Caco-2 (cell line): ENCODE measurements at regions of chr20 and their contacts with region 1.

Region 1: GRCh38 chr20:6583134-6583738 is 184.2 kb upstream of the BMP2 start:
- DNase-seq: peak; percentile 58 to 70
- H3K4me3 ChIP-seq: no peak overlapping the region
- H3K4me3 Mint-ChIP-seq: no peak overlapping the region
- H3K27ac Mint-ChIP-seq: no peak overlapping the region
- H3K4me1 ChIP-seq: no peaks in the 10 kb centered on the region
- H3K4me1 Mint-ChIP-seq: peaks cover 7% of the 10 kb centered on the region
- H3K27me3 ChIP-seq: no peaks in the 10 kb centered on the region
- H3K27me3 Mint-ChIP-seq: no peaks in the 10 kb centered on the region
- CTCF ChIP-seq: peak; percentile 70 to 72

Region 2: DNA sequence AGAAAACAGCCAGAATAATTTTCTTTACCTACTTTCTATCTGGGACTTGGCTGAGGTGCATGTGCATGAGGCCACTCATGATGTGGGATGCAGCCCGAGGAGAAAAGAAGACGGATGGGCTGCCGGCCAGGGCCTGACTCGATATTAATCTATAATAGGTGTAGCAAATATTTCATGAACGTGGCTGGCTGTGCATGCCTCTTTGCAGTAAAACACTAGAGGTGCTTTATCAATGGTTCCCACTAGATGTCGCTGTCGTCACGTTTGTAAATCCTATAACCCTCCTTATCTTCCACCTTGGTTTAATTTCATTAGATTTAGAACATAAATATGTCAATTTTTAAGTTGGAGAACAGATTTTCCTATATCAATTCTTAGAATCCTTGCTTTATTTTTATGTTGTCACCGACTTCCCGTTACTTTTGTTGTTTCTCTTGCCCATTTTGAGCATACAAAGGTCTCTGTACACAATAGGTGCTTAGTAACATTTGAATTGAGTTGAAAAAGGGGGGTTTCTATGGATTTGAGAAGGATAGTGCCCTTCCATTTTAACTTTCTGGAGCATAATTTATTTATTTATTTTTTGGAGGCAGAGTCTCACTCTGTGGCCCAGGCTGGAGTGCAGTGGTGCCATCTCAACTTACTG is 440.8 kb before region 1 on chr20:
- CTCF ChIA-PET with region 1: no interaction called
- POLR2A ChIA-PET with region 1: no interaction called
- intact Hi-C with region 1: loop called (anchors 2 kb)
- DNase-seq: peak; percentile 54 to 67
- H3K4me3 ChIP-seq: no peak overlapping the region
- H3K4me3 Mint-ChIP-seq: no peak overlapping the region
- H3K27ac Mint-ChIP-seq: no peak overlapping the region
- H3K4me1 ChIP-seq: no peaks in the 10 kb centered on the region
- H3K4me1 Mint-ChIP-seq: no peaks in the 10 kb centered on the region
- H3K27me3 ChIP-seq: no peaks in the 10 kb centered on the region; the same call in 1 of the 2 replicates
- H3K27me3 Mint-ChIP-seq: peaks cover under 1% of the 10 kb centered on the region
- CTCF ChIP-seq: peak; percentile 71 to 84

Region 3: GRCh38 chr20:6623989-6624388 is 40.8 kb after region 1 on chr20:
- CTCF ChIA-PET with region 1: interaction called, 7 read pairs
- POLR2A ChIA-PET with region 1: no interaction called
- intact Hi-C with region 1: loop called (anchors 1 kb)
- DNase-seq: peak; percentile 65 to 77
- H3K4me3 ChIP-seq: no peak overlapping the region
- H3K4me3 Mint-ChIP-seq: peak overlapping the region; percentile 51
- H3K27ac Mint-ChIP-seq: no peak overlapping the region
- H3K4me1 ChIP-seq: peaks cover 15% of the 10 kb centered on the region
- H3K4me1 Mint-ChIP-seq: no peaks in the 10 kb centered on the region
- H3K27me3 ChIP-seq: no peaks in the 10 kb centered on the region
- H3K27me3 Mint-ChIP-seq: no peaks in the 10 kb centered on the region
- CTCF ChIP-seq: no peak

Region 4: DNA sequence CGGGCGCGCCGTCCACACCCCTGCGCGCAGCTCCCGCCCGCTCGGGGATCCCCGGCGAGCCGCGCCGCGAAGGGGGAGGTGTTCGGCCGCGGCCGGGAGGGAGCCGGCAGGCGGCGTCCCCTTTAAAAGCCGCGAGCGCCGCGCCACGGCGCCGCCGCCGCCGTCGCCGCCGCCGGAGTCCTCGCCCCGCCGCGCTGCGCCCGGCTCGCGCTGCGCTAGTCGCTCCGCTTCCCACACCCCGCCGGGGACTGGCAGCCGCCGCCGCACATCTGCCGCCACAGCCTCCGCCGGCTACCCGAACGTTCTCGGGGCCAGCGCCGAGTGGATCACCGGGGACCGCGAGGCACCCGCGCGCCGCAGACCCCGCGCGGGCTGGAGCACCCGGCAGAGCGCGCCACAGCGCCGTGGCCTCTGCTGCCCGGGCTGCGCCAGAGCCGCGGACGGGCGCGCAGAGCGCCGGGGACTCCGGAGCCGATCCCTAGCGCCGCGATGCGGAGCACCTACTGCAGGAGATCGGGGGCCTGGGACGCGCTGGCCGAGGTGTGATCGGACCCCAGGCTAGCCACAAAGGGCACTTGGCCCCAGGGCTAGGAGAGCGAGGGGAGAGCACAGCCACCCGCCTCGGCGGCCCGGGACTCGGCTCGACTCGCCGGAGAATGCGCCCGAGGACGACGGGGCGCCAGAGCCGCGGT is 184.4 kb after region 1 on chr20 and contains the start of gene BMP2:
- CTCF ChIA-PET with region 1: interaction called, 3 read pairs
- POLR2A ChIA-PET with region 1: no interaction called
- intact Hi-C with region 1: loop called (anchors 2 kb)
- DNase-seq: peak; percentile 63 to 79
- H3K4me3 ChIP-seq: peak within 1 kb of the TSS; percentile 96
- H3K4me3 Mint-ChIP-seq: peak within 1 kb of the TSS; percentile 92
- H3K27ac Mint-ChIP-seq: peak within 1 kb of the TSS; percentile 53
- H3K4me1 ChIP-seq: peaks cover 21% of the 10 kb centered on the region
- H3K4me1 Mint-ChIP-seq: peaks cover 33% of the 10 kb centered on the region
- H3K27me3 ChIP-seq: no peaks in the 10 kb centered on the region
- H3K27me3 Mint-ChIP-seq: no peaks in the 10 kb centered on the region
- CTCF ChIP-seq: no peak
- total RNA-seq, gene BMP2: 24.3 and 27.3 TPM in 2 replicates

Region 5: GRCh38 chr20:7031222-7031621 is 448.0 kb after region 1 on chr20:
- CTCF ChIA-PET with region 1: no interaction called
- POLR2A ChIA-PET with region 1: no interaction called
- intact Hi-C with region 1: no loop called
- DNase-seq: no peak
- H3K4me3 ChIP-seq: no peak overlapping the region
- H3K4me3 Mint-ChIP-seq: no peak overlapping the region
- H3K27ac Mint-ChIP-seq: no peak overlapping the region
- H3K4me1 ChIP-seq: no peaks in the 10 kb centered on the region
- H3K4me1 Mint-ChIP-seq: no peaks in the 10 kb centered on the region
- H3K27me3 ChIP-seq: no peaks in the 10 kb centered on the region; the same call in 1 of the 2 replicates
- H3K27me3 Mint-ChIP-seq: peaks cover 5% of the 10 kb centered on the region
- CTCF ChIP-seq: peak; percentile 37 to 51

Region 6: DNA sequence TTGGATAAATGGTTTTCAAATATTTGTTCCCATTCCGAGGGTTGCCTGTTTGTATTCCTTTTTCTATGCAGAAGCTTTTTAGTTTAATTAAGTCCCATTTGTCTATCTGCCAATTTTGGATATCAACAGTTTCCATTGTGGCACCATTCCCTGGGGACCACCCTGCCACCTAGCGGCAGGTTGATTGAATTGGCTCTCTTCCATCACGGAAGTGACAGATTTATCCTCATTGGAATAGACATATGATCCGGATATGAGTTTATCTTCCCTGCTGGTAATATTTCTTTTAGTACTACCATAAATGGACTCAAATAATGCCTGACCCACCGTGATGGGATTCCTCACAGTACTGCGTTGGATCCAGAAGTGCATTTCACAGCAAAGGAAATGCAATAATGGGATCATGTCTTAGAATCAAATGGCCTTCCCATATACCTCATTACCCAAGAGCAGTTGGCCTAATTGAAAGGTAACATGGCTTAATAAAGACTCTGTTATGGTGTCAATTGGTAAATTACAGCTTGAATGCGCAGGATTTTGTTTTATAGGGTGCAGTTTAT is 511.3 kb after region 1 on chr20:
- CTCF ChIA-PET with region 1: no interaction called
- POLR2A ChIA-PET with region 1: no interaction called
- intact Hi-C with region 1: loop called (anchors 2 kb)
- DNase-seq: peak; percentile 48 to 75
- H3K4me3 ChIP-seq: no peak overlapping the region
- H3K4me3 Mint-ChIP-seq: no peak overlapping the region
- H3K27ac Mint-ChIP-seq: no peak overlapping the region
- H3K4me1 ChIP-seq: peaks cover 21% of the 10 kb centered on the region
- H3K4me1 Mint-ChIP-seq: peaks cover 6% of the 10 kb centered on the region
- H3K27me3 ChIP-seq: no peaks in the 10 kb centered on the region
- H3K27me3 Mint-ChIP-seq: peaks cover 2% of the 10 kb centered on the region
- CTCF ChIP-seq: peak; percentile 85 to 88